ENCODE measurements at regions of chr1 and their contacts with region 1.

Region 1: GRCh38 chr1:108643492-108644335 is 17.2 kb downstream of the HENMT1 start:
- DNase-seq: peak; percentile 71
- H3K4me3 Mint-ChIP-seq: no peak overlapping the region
- H3K27ac Mint-ChIP-seq: no peak overlapping the region
- H3K4me1 Mint-ChIP-seq: peaks cover 60% of the 10 kb centered on the region
- H3K27me3 Mint-ChIP-seq: no peaks in the 10 kb centered on the region

Region 2: GRCh38 chr1:107782217-107782845 is 861.4 kb before region 1 on chr1:
- CTCF ChIA-PET with region 1: no interaction called
- intact Hi-C with region 1: loop called (anchors 1 kb)
- DNase-seq: peak; percentile 59
- H3K4me3 Mint-ChIP-seq: no peak overlapping the region
- H3K27ac Mint-ChIP-seq: no peak overlapping the region
- H3K4me1 Mint-ChIP-seq: peaks cover 23% of the 10 kb centered on the region
- H3K27me3 Mint-ChIP-seq: no peaks in the 10 kb centered on the region

Region 3: GRCh38 chr1:108089477-108089876 is 554.2 kb before region 1 on chr1:
- CTCF ChIA-PET with region 1: no interaction called
- intact Hi-C with region 1: no loop called
- DNase-seq: no peak
- H3K4me3 Mint-ChIP-seq: no peak overlapping the region
- H3K27ac Mint-ChIP-seq: no peak overlapping the region
- H3K4me1 Mint-ChIP-seq: peaks cover 2% of the 10 kb centered on the region
- H3K27me3 Mint-ChIP-seq: no peaks in the 10 kb centered on the region

Region 4: GRCh38 chr1:108199781-108200570 is 443.7 kb before region 1 on chr1 and contains the start of gene SLC25A24:
- CTCF ChIA-PET with region 1: no interaction called
- intact Hi-C with region 1: loop called (anchors 5 kb)
- DNase-seq: peak; percentile 70
- H3K4me3 Mint-ChIP-seq: peak within 1 kb of the TSS; percentile 86
- H3K27ac Mint-ChIP-seq: no peak within 1 kb of the TSS
- H3K4me1 Mint-ChIP-seq: peaks cover 14% of the 10 kb centered on the region
- H3K27me3 Mint-ChIP-seq: no peaks in the 10 kb centered on the region
- total RNA-seq, gene SLC25A24: 5.2 to 5.5 TPM

Region 5: DNA sequence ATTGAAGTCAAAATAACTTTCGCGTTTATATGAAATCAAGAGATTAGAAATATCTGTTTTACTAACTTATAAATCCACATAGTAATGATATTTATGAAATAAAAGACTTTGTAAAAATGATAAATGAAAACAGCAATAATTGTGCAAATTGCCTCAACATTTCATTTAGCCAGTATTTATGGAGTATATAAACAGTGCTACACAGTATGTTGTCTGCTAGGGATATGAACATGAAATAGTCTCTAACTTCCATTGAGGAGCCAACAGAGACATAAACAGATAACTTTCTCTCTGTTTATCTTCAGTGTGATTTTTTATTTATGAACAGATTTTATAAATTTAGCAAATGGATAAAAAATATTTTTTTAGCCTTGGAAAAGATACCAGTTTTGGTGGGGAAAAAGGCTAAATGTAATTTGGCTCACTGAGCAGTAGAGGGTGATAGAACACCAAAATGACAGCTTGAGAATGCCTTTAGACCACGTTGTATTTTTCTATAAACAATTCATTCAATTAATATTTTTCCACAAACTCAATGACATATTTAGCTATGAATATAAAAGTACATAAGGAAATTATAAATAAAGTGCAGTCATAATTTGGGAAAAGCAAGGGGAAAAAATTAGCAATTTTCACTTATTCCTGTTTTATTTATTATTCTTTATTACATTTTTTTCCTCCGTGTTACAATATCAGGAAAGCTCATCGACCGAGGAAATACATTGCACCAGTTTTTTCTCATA is 131.3 kb before region 1 on chr1:
- CTCF ChIA-PET with region 1: interaction called, 65 read pairs
- intact Hi-C with region 1: loop called (anchors 1 kb)
- DNase-seq: no peak
- H3K4me3 Mint-ChIP-seq: no peak overlapping the region
- H3K27ac Mint-ChIP-seq: no peak overlapping the region
- H3K4me1 Mint-ChIP-seq: no peaks in the 10 kb centered on the region
- H3K27me3 Mint-ChIP-seq: peaks cover 1% of the 10 kb centered on the region

Region 6: GRCh38 chr1:108590957-108591356 is 52.8 kb before region 1 on chr1:
- CTCF ChIA-PET with region 1: interaction called, 4 read pairs
- intact Hi-C with region 1: loop called (anchors 2 kb)
- DNase-seq: no peak
- H3K4me3 Mint-ChIP-seq: no peak overlapping the region
- H3K27ac Mint-ChIP-seq: no peak overlapping the region
- H3K4me1 Mint-ChIP-seq: peaks cover 33% of the 10 kb centered on the region
- H3K27me3 Mint-ChIP-seq: no peaks in the 10 kb centered on the region

Region 7: DNA sequence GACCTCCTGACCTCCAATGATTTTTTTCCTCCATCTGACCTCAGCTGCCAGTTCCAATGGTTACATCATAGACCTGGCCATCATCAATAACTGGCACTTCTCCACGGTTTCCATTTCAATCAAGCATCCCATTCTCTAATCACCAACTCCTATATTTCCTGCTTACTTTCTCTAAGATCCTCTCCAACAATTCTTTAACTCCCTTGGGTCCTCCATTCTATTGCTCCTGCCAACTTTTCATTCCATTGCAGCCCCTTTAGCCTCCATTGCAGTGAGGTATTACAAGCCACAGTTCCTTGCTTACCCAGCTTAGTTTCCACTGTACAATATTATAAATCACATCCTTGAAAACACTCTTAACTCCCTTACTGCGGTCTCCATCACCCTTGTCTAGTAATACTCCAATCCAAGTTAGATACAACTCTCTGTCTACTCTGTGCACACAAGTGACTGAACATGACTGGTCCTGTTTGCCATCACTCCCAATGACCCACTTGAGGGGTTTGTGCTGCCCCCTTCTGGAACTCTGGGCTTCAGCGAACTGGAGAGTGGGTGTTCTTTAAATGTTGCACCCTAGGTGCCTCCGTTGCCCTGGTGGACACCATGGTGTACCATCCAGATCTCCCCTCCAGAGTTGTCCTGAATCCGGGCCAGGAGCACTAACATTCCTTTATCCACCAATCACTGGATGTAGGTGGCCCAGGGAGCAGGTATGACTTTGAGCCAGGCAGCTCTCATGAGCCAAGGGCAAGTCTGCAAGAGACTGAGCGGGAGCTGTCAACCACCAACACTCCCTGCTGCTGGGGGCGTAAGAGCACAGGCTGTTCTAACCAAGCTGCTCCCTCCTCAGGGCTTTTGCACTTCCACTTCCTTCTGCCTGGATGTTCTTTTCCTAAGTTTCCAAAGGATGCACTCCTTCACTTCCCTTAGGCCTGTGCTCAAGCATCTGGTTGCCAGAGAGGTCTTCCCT is 65.3 kb after region 1 on chr1:
- CTCF ChIA-PET with region 1: interaction called, 7 read pairs
- intact Hi-C with region 1: loop called (anchors 1 kb)
- DNase-seq: peak; percentile 81
- H3K4me3 Mint-ChIP-seq: no peak overlapping the region
- H3K27ac Mint-ChIP-seq: no peak overlapping the region
- H3K4me1 Mint-ChIP-seq: peaks cover 11% of the 10 kb centered on the region
- H3K27me3 Mint-ChIP-seq: no peaks in the 10 kb centered on the region

Region 8: DNA sequence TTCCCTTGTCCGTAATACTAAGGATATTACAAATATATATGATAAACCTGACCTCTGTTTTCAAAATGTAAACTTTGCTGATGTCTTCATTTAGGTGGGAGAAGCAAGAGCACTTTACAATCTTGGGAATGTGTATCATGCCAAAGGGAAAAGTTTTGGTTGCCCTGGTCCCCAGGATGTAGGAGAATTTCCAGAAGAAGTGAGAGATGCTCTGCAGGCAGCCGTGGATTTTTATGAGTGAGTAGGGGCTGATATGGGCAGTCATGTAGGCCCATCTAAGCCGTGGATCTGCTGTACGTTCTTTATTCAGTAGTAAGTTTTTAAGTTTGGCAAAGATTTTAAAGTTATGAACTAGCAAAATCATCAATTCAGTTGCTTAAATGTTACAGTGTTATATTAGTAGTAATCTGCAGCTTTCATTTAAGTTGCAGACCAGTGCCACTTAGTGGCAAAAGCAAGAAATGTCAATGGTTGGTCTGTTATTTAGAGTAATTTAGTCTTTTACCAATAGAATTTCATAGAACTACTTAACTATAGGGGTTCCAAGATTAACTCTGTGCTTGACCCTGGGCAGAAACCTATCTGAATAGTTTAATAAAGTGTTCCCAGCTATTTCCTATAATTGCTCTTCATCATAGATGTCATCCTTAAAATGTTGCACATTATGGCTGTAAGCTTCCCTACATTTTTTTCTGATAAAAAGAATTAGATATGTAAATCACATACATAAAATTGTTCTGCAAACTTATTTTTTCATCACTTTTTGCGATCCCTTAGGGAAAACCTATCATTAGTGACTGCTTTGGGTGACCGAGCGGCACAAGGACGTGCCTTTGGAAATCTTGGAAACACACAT is 254.4 kb after region 1 on chr1:
- CTCF ChIA-PET with region 1: no interaction called
- intact Hi-C with region 1: loop called (anchors 5 kb)
- DNase-seq: peak; percentile 43
- H3K4me3 Mint-ChIP-seq: no peak overlapping the region
- H3K27ac Mint-ChIP-seq: no peak overlapping the region
- H3K4me1 Mint-ChIP-seq: no peaks in the 10 kb centered on the region
- H3K27me3 Mint-ChIP-seq: peaks cover 2% of the 10 kb centered on the region